ENCODE measurements at regions of chrX and their contacts with region 1.

Region 1: DNA sequence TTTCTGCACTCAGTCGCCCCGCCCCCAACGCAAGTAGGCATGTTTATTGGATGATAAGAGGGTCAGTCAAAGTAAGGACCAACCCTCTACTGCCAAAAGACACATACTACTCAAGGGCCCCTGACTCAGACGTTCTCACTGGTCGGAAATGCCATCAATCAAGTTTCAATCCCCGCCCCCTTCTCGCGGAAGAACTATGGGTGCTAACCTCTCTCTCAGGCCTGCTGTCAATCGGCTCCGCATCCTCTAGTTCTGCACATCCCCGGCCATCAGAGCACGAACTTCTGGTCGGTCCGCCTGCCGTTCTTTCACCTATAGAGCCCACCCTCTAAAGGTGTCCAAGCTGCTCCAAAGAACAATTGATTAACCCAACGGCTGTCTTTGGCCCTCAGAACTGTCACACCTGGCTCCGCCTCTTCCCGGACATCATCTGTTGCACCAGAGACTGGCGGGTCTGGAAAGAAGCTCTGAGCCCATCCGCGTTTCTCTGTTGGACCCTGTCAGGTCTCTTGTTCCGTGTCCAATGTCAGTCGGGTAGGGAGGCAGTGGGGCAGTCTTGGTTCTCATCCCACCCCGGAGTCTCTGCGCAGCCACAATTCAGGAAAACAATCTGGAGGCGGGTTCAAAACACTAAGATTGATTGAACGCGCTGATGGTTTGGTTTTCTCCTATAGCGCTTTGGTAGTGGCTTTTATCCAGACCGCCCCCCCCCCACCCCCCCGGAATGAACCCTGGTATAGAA is 15.2 kb downstream of the NDUFB11 start:
- DNase-seq: peak; percentile 94
- H3K4me3 Mint-ChIP-seq: peak overlapping the region; percentile 96
- H3K27ac Mint-ChIP-seq: peak overlapping the region; percentile 95
- H3K4me1 Mint-ChIP-seq: peaks cover 4% of the 10 kb centered on the region
- H3K27me3 Mint-ChIP-seq: no peaks in the 10 kb centered on the region

Region 2: GRCh38 chrX:47482512-47483309 is 353.4 kb after region 1 on chrX and contains the start of gene ZNF41:
- CTCF ChIA-PET with region 1: no interaction called
- POLR2A ChIA-PET with region 1: no interaction called
- intact Hi-C with region 1: loop called (anchors 2 kb)
- DNase-seq: peak; percentile 80
- H3K4me3 Mint-ChIP-seq: peak within 1 kb of the TSS; percentile 86
- H3K27ac Mint-ChIP-seq: peak within 1 kb of the TSS; percentile 95
- H3K4me1 Mint-ChIP-seq: peaks cover 29% of the 10 kb centered on the region
- H3K27me3 Mint-ChIP-seq: no peaks in the 10 kb centered on the region
- total RNA-seq, gene ZNF41: 8.4 to 8.7 TPM

Measured in activated CD4-positive, alpha-beta memory T cell treated with anti-CD3 and anti-CD28 coated beads for 36 hours (primary cell).